ENCODE measurements at regions of chr16 and their contacts with region 1.

Region 1: GRCh38 chr16:87571136-87571867 is 31.0 kb upstream of the JPH3 start:
- DNase-seq: no peak
- H3K4me3 ChIP-seq: no peak overlapping the region
- H3K27me3 ChIP-seq: peaks cover 2% of the 10 kb centered on the region; the same call in 1 of the 2 replicates
- CTCF ChIP-seq: peak; percentile 62

Region 2: DNA sequence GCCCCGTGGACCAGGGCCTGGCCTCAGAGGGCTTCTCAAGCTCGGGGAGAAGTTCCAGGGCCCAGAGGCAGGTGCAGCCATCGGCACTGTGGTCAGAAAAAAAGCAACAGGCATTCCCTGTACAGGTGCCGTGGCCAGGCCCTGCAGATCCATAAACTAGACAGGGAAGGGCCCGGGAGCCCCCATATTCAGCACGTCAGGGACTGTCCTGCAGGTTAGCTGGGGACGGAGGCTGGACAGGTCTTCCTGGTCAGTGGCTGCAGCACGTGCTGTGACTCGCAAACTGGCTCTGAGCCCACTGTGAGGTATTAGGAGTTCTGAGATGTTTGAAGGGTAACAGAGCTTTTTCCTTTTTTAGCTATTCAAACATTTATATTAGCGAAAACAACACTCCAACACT is 239.2 kb before region 1 on chr16:
- CTCF ChIA-PET with region 1: no interaction called
- POLR2A ChIA-PET with region 1: no interaction called
- DNase-seq: no peak
- H3K4me3 ChIP-seq: no peak overlapping the region
- H3K27me3 ChIP-seq: no peaks in the 10 kb centered on the region
- CTCF ChIP-seq: no peak

Region 3: GRCh38 chr16:87416826-87417527 is 154.3 kb before region 1 on chr16:
- CTCF ChIA-PET with region 1: interaction called, 23 read pairs
- POLR2A ChIA-PET with region 1: no interaction called
- DNase-seq: no peak
- H3K4me3 ChIP-seq: no peak overlapping the region
- H3K27me3 ChIP-seq: no peaks in the 10 kb centered on the region
- CTCF ChIP-seq: peak; percentile 75

Region 4: GRCh38 chr16:87556941-87557459 is 14.3 kb before region 1 on chr16:
- CTCF ChIA-PET with region 1: interaction called, 10 read pairs
- POLR2A ChIA-PET with region 1: no interaction called
- DNase-seq: no peak
- H3K4me3 ChIP-seq: no peak overlapping the region
- H3K27me3 ChIP-seq: no peaks in the 10 kb centered on the region; the same call in 1 of the 2 replicates
- CTCF ChIP-seq: no peak

Region 5: GRCh38 chr16:87581833-87582203 is 10.5 kb after region 1 on chr16:
- CTCF ChIA-PET with region 1: interaction called, 10 read pairs
- POLR2A ChIA-PET with region 1: no interaction called
- DNase-seq: peak; percentile 78
- H3K4me3 ChIP-seq: no peak overlapping the region
- H3K27me3 ChIP-seq: peaks cover 3% of the 10 kb centered on the region
- CTCF ChIP-seq: no peak